Activated CD4-positive, alpha-beta memory T cell treated with anti-CD3 and anti-CD28 coated beads for 36 hours (primary cell): ENCODE measurements at regions of chr16 and their contacts with region 1.

Region 1: GRCh38 chr16:81204798-81205680 is 33.5 kb upstream of the BCO1 start:
- DNase-seq: peak; percentile 12
- H3K4me3 Mint-ChIP-seq: no peak overlapping the region
- H3K27ac Mint-ChIP-seq: no peak overlapping the region
- H3K4me1 Mint-ChIP-seq: peaks cover 2% of the 10 kb centered on the region
- H3K27me3 Mint-ChIP-seq: peaks cover 12% of the 10 kb centered on the region

Region 2: DNA sequence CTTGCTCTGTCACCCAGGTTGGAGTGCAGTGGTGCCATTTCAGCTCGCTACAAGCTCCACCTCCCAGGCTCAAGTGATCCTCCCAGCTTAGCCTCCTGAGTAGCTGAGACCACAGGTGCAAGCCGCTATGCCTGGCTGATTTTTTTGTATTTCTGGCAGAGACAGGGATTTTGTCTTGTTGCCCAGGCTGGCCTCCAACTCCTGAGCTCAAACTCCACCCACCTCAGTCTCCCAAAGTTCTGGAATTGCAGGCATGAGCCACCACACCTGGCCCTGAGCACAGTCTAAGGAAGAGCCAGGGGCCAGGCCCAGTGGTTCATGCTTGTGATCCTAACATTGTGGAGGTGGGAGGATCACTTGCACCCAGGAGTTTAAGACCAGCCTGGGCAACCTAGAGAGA is 11.7 kb after region 1 on chr16:
- CTCF ChIA-PET with region 1: interaction called, 11 read pairs
- POLR2A ChIA-PET with region 1: no interaction called
- intact Hi-C with region 1: no loop called
- DNase-seq: no peak
- H3K4me3 Mint-ChIP-seq: no peak overlapping the region
- H3K27ac Mint-ChIP-seq: no peak overlapping the region
- H3K4me1 Mint-ChIP-seq: no peaks in the 10 kb centered on the region
- H3K27me3 Mint-ChIP-seq: peaks cover 3% of the 10 kb centered on the region

Region 3: DNA sequence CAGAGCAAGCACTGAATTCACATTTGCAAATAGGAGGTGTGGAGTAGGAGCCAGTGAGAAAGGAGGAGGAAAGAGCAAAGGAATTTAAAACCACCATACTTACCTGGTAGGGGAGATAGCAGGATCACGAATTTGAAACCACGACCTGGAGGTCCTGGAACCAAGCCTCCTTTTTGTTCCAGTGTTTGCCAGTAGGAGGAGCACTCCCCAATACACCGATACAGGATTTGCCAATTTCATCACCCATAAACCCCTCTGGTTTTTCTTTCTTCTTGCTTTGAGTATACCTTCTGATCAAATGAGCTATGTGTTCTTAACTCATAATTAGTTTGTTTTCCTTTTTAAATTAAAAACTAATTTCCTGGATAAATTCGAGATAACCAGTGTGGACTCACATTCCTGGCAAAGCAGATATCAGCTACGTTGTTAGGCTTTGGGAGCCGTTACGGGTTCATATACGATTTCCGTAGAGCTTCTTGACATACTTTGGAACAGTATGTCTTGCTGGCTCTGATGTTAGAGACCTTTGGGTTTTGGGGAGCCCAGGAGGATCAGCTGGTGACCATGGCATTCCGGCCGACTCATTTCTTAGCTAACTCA is 56.1 kb after region 1 on chr16:
- CTCF ChIA-PET with region 1: interaction called, 11 read pairs
- POLR2A ChIA-PET with region 1: no interaction called
- intact Hi-C with region 1: no loop called
- DNase-seq: peak; percentile 49
- H3K4me3 Mint-ChIP-seq: no peak overlapping the region
- H3K27ac Mint-ChIP-seq: no peak overlapping the region
- H3K4me1 Mint-ChIP-seq: no peaks in the 10 kb centered on the region
- H3K27me3 Mint-ChIP-seq: peaks cover 10% of the 10 kb centered on the region

Region 4: GRCh38 chr16:81349996-81350618 is 145.1 kb after region 1 on chr16:
- CTCF ChIA-PET with region 1: interaction called, 3 read pairs
- POLR2A ChIA-PET with region 1: no interaction called
- intact Hi-C with region 1: loop called (anchors 10 kb)
- DNase-seq: no peak
- H3K4me3 Mint-ChIP-seq: no peak overlapping the region
- H3K27ac Mint-ChIP-seq: no peak overlapping the region
- H3K4me1 Mint-ChIP-seq: peaks cover 11% of the 10 kb centered on the region
- H3K27me3 Mint-ChIP-seq: no peaks in the 10 kb centered on the region

Region 5: DNA sequence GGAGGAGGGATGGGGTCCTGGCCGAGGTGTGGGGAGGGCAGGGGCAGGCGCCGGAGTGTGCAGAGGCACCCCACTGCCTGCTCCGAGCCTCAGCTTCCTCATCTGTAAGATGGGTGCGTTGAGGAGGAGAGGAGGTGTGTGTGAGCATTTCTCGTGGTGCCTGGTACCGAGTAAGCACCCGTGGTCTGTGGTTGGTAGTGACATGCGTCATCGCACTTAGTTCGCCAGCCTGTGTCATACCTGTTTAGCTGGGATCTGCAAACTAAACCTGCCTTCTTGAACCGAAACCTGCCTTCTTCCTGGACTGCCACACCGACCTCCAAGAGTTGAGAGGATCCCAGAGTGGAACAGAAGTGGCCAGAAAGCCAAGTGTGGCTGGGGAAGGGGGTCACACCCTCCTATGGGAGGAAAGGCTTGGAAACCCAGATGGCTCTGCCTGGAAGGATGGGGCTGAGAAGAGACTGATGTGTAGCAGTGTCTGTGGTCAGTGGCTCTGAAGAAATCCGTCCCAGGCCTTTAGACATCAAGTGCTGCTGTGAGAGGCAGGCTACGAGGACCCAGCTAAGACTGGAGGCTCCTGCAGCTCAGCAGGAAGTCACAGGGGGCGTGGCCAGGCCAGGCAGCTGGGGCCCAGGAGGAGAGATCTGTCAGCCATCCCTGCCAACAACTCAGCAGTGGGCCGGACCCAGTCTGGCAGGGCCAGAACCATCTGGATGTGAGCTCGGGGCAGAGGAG is 411.4 kb after region 1 on chr16:
- CTCF ChIA-PET with region 1: no interaction called
- POLR2A ChIA-PET with region 1: no interaction called
- intact Hi-C with region 1: no loop called
- DNase-seq: peak; percentile 91
- H3K4me3 Mint-ChIP-seq: peak overlapping the region; percentile 26
- H3K27ac Mint-ChIP-seq: peak overlapping the region; percentile 92
- H3K4me1 Mint-ChIP-seq: peaks cover 18% of the 10 kb centered on the region
- H3K27me3 Mint-ChIP-seq: no peaks in the 10 kb centered on the region

Region 6: GRCh38 chr16:81723098-81723723 is 518.2 kb after region 1 on chr16:
- CTCF ChIA-PET with region 1: no interaction called
- POLR2A ChIA-PET with region 1: interaction called, 4 read pairs
- intact Hi-C with region 1: loop called (anchors 5 kb)
- DNase-seq: peak; percentile 33
- H3K4me3 Mint-ChIP-seq: no peak overlapping the region
- H3K27ac Mint-ChIP-seq: peak overlapping the region; percentile 60
- H3K4me1 Mint-ChIP-seq: peaks cover 13% of the 10 kb centered on the region
- H3K27me3 Mint-ChIP-seq: no peaks in the 10 kb centered on the region

Region 7: GRCh38 chr16:81737885-81738786 is 533.1 kb after region 1 on chr16:
- CTCF ChIA-PET with region 1: interaction called, 9 read pairs
- POLR2A ChIA-PET with region 1: interaction called, 3 read pairs
- intact Hi-C with region 1: loop called (anchors 1 kb)
- DNase-seq: peak; percentile 93
- H3K4me3 Mint-ChIP-seq: peak overlapping the region; percentile 53
- H3K27ac Mint-ChIP-seq: peak overlapping the region; percentile 7
- H3K4me1 Mint-ChIP-seq: peaks cover 8% of the 10 kb centered on the region
- H3K27me3 Mint-ChIP-seq: no peaks in the 10 kb centered on the region